ENCODE measurements at regions of chr19 and their contacts with region 1.

Region 1: GRCh38 chr19:50777754-50778303 is 7.6 kb downstream of the GPR32 start:
- DNase-seq: no peak
- H3K4me3 ChIP-seq: no peak overlapping the region
- H3K27ac ChIP-seq: no peak overlapping the region
- H3K4me1 ChIP-seq: no peaks in the 10 kb centered on the region
- H3K27me3 ChIP-seq: peaks cover 0 to 38% of the 10 kb centered on the region in 2 donors
- CTCF ChIP-seq: no peak
- POLR2A ChIP-seq: no peak

Region 2: DNA sequence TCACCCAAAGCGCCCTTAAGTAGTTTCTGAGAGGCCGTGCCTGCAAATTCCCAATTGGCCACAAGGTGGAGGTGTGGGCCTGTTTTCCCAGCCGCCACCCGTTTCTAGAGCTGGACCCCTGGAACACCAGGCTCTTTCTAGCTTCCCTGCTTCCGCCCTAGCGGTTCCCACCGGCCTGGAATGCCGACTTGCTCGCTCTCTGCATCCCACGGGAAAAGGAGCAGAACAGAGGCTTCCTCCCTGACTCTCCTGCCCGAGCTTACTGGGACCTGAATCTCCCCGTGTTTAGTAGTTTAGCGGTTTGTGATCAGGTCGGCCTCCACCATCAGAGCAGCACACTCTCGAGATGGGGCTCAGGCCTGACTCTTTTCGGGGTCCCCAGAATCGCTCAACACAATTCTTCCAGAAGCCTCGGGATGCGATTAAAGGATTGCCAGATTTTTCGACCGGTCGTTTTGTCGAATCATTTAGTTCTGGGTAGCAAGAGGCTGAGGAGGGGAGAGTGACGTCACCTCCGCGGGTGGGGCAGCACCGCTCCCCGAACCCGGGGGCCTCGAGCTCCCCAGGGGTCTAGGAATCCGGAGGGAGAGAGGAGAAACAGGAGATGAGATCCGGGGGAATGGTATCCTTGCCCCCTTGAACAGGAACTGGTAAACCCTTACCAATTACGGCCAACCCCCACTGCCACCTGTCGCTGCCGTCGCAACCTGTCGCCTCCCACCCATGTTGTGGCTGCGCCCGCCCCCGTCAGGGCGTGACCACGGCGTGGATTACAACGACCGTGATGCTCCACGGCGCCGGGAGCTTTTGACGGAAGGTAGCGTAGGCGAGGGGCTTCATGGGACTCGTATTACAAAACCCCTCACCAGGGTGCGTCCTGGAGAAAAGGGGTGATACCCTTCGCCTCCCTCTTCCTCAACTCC is 420.4 kb before region 1 on chr19:
- intact Hi-C with region 1: loop called (anchors 10 kb)
- DNase-seq: peak; percentile 80 to 83
- H3K4me3 ChIP-seq: peak overlapping the region; percentile 38 to 45
- H3K27ac ChIP-seq: peak overlapping the region; percentile 82 to 88
- H3K4me1 ChIP-seq: no peaks in the 10 kb centered on the region
- H3K27me3 ChIP-seq: no peaks in the 10 kb centered on the region
- CTCF ChIP-seq: peak; percentile 86 to 92 (median 88)
- POLR2A ChIP-seq: peak in 1 of 2 donors; percentile 23

Region 3: GRCh38 chr19:50376166-50377050 is 401.4 kb before region 1 on chr19 and contains the start of gene NR1H2:
- intact Hi-C with region 1: loop called (anchors 10 kb)
- DNase-seq: peak; percentile 95 to 96
- H3K4me3 ChIP-seq: peak within 1 kb of the TSS; percentile 91 to 98
- H3K27ac ChIP-seq: peak within 1 kb of the TSS; percentile 98 to 100
- H3K4me1 ChIP-seq: no peaks in the 10 kb centered on the region
- H3K27me3 ChIP-seq: no peaks in the 10 kb centered on the region
- CTCF ChIP-seq: peak in 1 of 4 experiments; percentile 13
- POLR2A ChIP-seq: peak; percentile 67 to 82
- total RNA-seq, gene NR1H2: 45.3 to 115 (median 61.4) TPM

Region 4: DNA sequence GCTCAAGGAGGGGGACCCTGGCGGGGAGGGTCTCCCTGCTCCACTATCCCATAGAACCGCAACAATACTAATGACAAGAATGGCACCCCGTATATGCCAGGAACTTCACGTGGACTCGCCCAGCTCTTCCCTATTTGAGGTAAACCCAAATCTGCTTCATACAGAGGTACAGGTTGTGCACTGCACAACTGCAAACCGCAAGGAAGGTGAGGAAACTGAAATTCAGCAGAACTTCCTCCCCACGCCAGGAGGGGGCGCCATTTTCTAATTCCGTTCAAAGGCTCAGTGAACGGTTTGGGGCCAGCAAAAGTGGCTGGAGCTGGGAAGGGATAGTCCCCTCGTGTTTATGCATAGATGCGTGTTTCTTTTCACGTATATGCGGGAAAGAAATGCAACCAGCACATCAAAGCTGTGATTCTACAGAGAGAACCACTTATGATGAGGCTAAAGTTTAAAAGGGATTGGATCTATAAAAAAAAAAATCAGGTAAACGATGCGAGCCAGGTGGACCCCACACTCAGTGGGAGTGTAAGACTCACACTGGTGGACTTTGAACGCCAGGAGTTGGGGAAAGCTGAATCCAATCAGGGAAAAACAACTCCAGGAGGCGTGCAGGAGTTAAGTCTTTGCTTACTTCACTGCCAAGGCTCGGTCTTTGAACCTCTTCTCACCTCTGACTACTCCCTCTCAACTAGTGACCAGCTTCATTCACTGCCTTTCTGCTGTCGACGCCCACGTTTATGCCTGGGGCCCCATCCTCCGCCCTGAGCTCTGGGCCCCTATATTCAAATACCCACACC is 108.3 kb before region 1 on chr19:
- intact Hi-C with region 1: no loop called
- DNase-seq: no peak
- H3K4me3 ChIP-seq: no peak overlapping the region
- H3K27ac ChIP-seq: no peak overlapping the region
- H3K4me1 ChIP-seq: peaks cover 0 to 4% of the 10 kb centered on the region in 2 donors
- H3K27me3 ChIP-seq: peaks cover 10 to 21% of the 10 kb centered on the region in 2 donors
- CTCF ChIP-seq: peak; percentile 38 to 51 (median 46)
- POLR2A ChIP-seq: no peak